OCI-LY7 (cell line): ENCODE measurements at regions of chr2 and their contacts with region 1.

Region 1: GRCh38 chr2:82055858-82056257 is 1751.3 kb upstream of the LRRTM1 start:
- DNase-seq: no peak
- H3K4me3 ChIP-seq: no peak overlapping the region
- H3K27ac ChIP-seq: no peak overlapping the region
- H3K4me1 ChIP-seq: no peaks in the 10 kb centered on the region
- CTCF ChIP-seq: no peak

Region 2: DNA sequence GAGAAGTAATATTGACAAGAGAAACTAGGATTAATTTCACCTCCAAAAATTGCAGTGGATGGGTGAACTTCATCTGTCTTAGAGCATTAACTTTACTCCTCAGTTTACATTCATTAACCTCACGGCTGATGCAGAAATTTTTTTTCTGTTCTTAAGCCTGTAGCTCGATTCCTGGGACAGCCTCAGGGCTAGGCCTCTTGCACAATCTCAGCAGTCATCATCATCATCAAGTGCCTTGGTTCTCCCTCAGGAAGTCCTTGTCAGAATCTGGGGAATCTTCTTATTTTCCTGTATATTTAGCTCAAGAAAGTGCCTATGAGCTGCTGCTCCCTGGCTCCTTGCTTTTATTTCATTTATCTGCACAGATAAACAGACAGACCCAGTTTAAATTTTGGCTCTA is 479.1 kb before region 1 on chr2:
- CTCF ChIA-PET with region 1: no interaction called
- POLR2A ChIA-PET with region 1: no interaction called
- intact Hi-C with region 1: loop called (anchors 5 kb)
- DNase-seq: no peak
- H3K4me3 ChIP-seq: no peak overlapping the region
- H3K27ac ChIP-seq: no peak overlapping the region
- H3K4me1 ChIP-seq: no peaks in the 10 kb centered on the region
- CTCF ChIP-seq: no peak

Region 3: GRCh38 chr2:82043867-82044266 is 12.0 kb before region 1 on chr2:
- CTCF ChIA-PET with region 1: no interaction called
- POLR2A ChIA-PET with region 1: no interaction called
- intact Hi-C with region 1: no loop called
- DNase-seq: no peak
- H3K4me3 ChIP-seq: no peak overlapping the region
- H3K27ac ChIP-seq: no peak overlapping the region
- H3K4me1 ChIP-seq: no peaks in the 10 kb centered on the region
- CTCF ChIP-seq: no peak

Region 4: DNA sequence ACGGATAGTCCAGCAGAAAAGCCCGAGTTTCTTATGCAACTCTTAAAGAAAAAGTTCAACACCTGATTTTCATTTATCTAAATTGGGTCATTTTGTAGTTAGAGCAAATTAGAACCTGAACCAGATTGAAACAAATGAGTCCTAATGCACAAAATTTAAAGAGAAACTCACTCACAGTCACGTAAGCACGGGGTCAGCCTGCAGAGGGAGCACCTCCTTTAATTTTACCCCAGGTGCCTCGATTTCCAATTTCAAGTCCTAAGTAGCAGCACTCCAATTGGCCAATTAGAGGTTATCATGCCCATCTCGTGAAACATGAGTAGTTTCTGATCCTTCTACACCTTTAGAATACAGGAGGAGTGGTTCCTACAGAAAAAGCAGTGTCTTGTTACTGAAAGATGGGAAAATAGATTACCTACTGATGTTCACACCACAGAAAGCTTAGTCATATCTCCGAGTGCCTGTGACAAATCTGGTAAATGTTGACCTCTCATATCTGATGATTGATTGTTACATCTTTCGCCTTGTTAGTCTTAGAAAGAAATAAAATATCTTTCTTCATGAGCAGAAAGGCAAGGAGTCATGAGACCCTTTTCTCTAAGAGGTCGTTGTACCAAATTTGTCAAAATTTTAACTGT is 178.5 kb after region 1 on chr2:
- CTCF ChIA-PET with region 1: no interaction called
- POLR2A ChIA-PET with region 1: no interaction called
- intact Hi-C with region 1: no loop called
- DNase-seq: no peak
- H3K4me3 ChIP-seq: no peak overlapping the region
- H3K27ac ChIP-seq: no peak overlapping the region
- H3K4me1 ChIP-seq: no peaks in the 10 kb centered on the region
- CTCF ChIP-seq: 0 out of 2 replicates have a peak, but pooled peaks have one; percentile 14